ENCODE measurements at regions of chr20 and their contacts with region 1.

Region 1: GRCh38 chr20:34516247-34517113 is at the start of gene DYNLRB1:
- DNase-seq: peak; percentile 95
- ATAC-seq: peak; percentile 83
- H3K4me3 ChIP-seq: peak within 1 kb of the TSS; percentile 66 to 99 (median 95)
- H3K4me3 Mint-ChIP-seq: peak within 1 kb of the TSS; percentile 97
- H3K27ac ChIP-seq: peak within 1 kb of the TSS; percentile 31 to 85
- H3K27ac Mint-ChIP-seq: peak within 1 kb of the TSS; percentile 97
- H3K4me1 ChIP-seq: peaks cover 5 to 10% of the 10 kb centered on the region in 2 donors
- H3K4me1 Mint-ChIP-seq: peaks cover 47% of the 10 kb centered on the region
- H3K27me3 ChIP-seq: no peaks in the 10 kb centered on the region
- H3K27me3 Mint-ChIP-seq: no peaks in the 10 kb centered on the region
- CTCF ChIP-seq: no peak
- total RNA-seq, gene DYNLRB1: 43.8 and 55.3 TPM in 2 replicates

Region 2: GRCh38 chr20:33992923-33993575 is 523.4 kb before region 1 on chr20:
- CTCF ChIA-PET with region 1: no interaction called
- POLR2A ChIA-PET with region 1: no interaction called
- intact Hi-C with region 1: loop called (anchors 5 kb)
- DNase-seq: peak; percentile 99
- ATAC-seq: peak; percentile 84
- H3K4me3 ChIP-seq: peak overlapping the region; percentile 94 to 99 (median 98)
- H3K4me3 Mint-ChIP-seq: peak overlapping the region; percentile 92
- H3K27ac ChIP-seq: peak overlapping the region; percentile 90 to 91
- H3K27ac Mint-ChIP-seq: peak overlapping the region; percentile 99
- H3K4me1 ChIP-seq: peaks cover 40 to 48% of the 10 kb centered on the region in 2 donors
- H3K4me1 Mint-ChIP-seq: peaks cover 59% of the 10 kb centered on the region
- H3K27me3 ChIP-seq: no peaks in the 10 kb centered on the region
- H3K27me3 Mint-ChIP-seq: no peaks in the 10 kb centered on the region
- CTCF ChIP-seq: no peak

Region 3: GRCh38 chr20:34302723-34303528 is 213.6 kb before region 1 on chr20 and contains the start of gene AHCY:
- CTCF ChIA-PET with region 1: interaction called, 5 read pairs
- POLR2A ChIA-PET with region 1: no interaction called
- intact Hi-C with region 1: loop called (anchors 1 kb)
- DNase-seq: peak; percentile 96
- ATAC-seq: peak; percentile 92
- H3K4me3 ChIP-seq: peak within 1 kb of the TSS; percentile 65 to 93 (median 85)
- H3K4me3 Mint-ChIP-seq: peak within 1 kb of the TSS; percentile 97
- H3K27ac ChIP-seq: peak within 1 kb of the TSS; percentile 75 to 87
- H3K27ac Mint-ChIP-seq: peak within 1 kb of the TSS; percentile 95
- H3K4me1 ChIP-seq: peaks cover 4 to 18% of the 10 kb centered on the region in 2 donors
- H3K4me1 Mint-ChIP-seq: peaks cover 19% of the 10 kb centered on the region
- H3K27me3 ChIP-seq: no peaks in the 10 kb centered on the region
- H3K27me3 Mint-ChIP-seq: no peaks in the 10 kb centered on the region
- CTCF ChIP-seq: peak; percentile 13
- total RNA-seq, gene AHCY: 43.6 and 43.8 TPM in 2 replicates

Region 4: GRCh38 chr20:34538671-34539123 is 22.2 kb after region 1 on chr20:
- CTCF ChIA-PET with region 1: interaction called, 15 read pairs
- POLR2A ChIA-PET with region 1: no interaction called
- intact Hi-C with region 1: no loop called
- DNase-seq: peak; percentile 67
- ATAC-seq: peak; percentile 68
- H3K4me3 ChIP-seq: no peak overlapping the region
- H3K4me3 Mint-ChIP-seq: no peak overlapping the region
- H3K27ac ChIP-seq: no peak overlapping the region
- H3K27ac Mint-ChIP-seq: no peak overlapping the region
- H3K4me1 ChIP-seq: no peaks in the 10 kb centered on the region
- H3K4me1 Mint-ChIP-seq: peaks cover 12% of the 10 kb centered on the region
- H3K27me3 ChIP-seq: no peaks in the 10 kb centered on the region
- H3K27me3 Mint-ChIP-seq: no peaks in the 10 kb centered on the region
- CTCF ChIP-seq: peak; percentile 92

Region 5: DNA sequence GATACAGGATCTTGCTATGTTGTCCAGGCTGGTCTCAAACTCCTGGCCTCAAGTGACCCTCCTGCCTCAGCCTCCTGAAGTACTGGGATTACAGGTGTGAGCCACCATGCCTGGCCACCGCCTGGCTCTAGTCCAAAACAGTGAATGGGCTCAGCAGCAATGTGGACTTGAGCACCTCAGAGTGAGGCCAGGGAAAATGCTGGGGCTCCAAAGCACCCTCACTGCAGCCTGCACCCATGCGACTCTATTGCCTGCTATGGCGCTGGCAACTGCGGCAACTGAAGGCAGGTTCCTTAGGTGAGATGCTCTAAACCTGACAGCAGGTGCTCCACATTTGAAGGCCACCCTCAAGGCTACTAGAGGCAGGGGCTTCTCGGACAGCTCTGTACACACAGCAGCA is 68.5 kb after region 1 on chr20:
- CTCF ChIA-PET with region 1: no interaction called
- POLR2A ChIA-PET with region 1: no interaction called
- intact Hi-C with region 1: no loop called
- DNase-seq: no peak
- ATAC-seq: no peak
- H3K4me3 ChIP-seq: no peak overlapping the region
- H3K4me3 Mint-ChIP-seq: no peak overlapping the region
- H3K27ac ChIP-seq: no peak overlapping the region
- H3K27ac Mint-ChIP-seq: no peak overlapping the region
- H3K4me1 ChIP-seq: peaks cover 9 to 19% of the 10 kb centered on the region in 2 donors
- H3K4me1 Mint-ChIP-seq: peaks cover 17% of the 10 kb centered on the region
- H3K27me3 ChIP-seq: no peaks in the 10 kb centered on the region
- H3K27me3 Mint-ChIP-seq: no peaks in the 10 kb centered on the region
- CTCF ChIP-seq: no peak

Region 6: DNA sequence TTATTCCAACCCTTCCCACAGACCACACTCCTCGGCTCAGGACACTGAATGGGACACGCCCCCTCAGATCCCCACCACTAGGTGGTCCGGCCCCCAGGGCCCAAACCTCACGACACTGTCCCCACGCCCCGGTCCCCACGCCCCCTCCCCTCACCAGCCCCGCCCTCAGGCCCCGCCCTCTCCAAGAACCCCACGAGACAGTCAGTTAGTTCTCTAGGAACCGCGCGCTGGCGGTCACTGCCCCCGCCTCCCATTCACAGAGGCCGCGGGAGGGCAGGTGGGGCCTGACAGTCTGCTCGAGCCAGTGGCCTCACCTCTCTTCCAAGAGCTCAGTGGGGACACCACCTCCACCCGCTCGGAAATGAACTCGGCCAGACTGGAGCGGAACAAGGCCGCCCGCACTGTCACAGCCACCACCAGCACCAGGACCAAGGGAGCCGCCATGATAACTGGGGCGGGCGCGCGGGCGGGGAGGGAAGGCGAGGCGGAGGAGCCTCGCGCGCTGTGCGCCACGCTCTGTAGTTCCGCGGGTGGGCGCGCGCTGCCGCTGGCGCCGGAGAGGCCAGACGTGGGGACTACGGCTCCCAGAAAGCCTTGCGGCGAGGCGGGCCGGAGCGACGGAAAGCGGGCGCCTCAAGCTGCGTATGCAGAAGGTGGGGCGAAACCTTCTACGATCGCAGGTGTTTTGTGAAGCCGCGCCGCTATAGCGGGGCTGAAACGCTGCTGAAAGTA is 160.3 kb after region 1 on chr20 and contains the start of gene PIGU:
- CTCF ChIA-PET with region 1: interaction called, 3 read pairs
- POLR2A ChIA-PET with region 1: interaction called, 8 read pairs
- intact Hi-C with region 1: loop called (anchors 1 kb)
- DNase-seq: peak; percentile 98
- ATAC-seq: peak; percentile 93
- H3K4me3 ChIP-seq: peak within 1 kb of the TSS; percentile 74 to 96 (median 78)
- H3K4me3 Mint-ChIP-seq: peak within 1 kb of the TSS; percentile 98
- H3K27ac ChIP-seq: peak within 1 kb of the TSS; percentile 74 to 86
- H3K27ac Mint-ChIP-seq: peak within 1 kb of the TSS; percentile 95
- H3K4me1 ChIP-seq: peaks cover 11 to 12% of the 10 kb centered on the region in 2 donors
- H3K4me1 Mint-ChIP-seq: peaks cover 17% of the 10 kb centered on the region
- H3K27me3 ChIP-seq: no peaks in the 10 kb centered on the region
- H3K27me3 Mint-ChIP-seq: no peaks in the 10 kb centered on the region
- CTCF ChIP-seq: no peak
- total RNA-seq, gene PIGU: 15.4 and 19.3 TPM in 2 replicates